Activated CD8-positive, alpha-beta T cell treated with anti-CD3 and anti-CD28 coated beads, Interleukin-2, amount 10 ng/mL, durations not matched to agents 7 days and 5 days (primary cell): ENCODE measurements at regions of chr17 and their contacts with region 1.

Region 1: DNA sequence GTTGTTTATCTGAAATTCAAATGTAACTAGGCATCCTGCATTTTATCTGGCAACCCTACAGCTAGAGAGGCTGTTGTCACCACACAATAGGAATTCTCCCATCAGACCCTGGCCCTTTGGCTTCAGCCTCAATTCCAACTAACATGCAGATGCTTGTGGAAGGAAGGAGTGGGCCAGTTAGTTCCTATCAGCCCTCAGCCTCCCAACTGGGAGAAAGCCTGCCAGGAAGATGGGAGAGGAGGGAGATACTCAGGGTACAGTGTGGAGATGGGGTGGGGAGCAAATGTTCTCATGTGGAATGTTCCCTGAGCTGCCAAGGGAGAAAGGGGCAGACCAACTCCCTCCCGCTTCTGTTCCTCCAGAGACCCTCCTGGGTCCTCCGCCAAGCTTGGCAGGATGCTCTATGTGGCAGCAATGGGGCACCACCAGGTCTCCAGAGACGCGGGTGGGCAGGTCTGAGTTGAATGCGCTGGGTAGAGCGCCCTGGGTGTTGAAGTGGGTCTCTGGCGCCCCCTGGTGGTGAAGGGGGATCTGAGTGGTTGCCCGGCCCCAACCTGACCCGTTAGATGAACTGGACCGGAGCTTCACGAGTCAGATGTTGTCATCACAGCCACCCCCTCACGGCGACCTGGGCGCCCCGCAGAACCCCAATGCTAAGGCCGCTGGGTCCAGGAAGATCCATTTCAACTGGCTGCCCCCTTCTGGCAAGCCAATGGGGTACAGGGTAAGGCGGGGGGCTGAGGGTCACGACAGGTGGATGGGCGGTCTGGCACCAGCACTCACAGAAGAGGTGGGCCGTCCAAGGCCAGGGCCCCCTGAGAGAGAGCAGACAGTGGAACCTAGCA is 15.2 kb downstream of the GALK1 start:
- DNase-seq: peak; percentile 93
- ATAC-seq: peak; percentile 73
- H3K4me3 Mint-ChIP-seq: no peak overlapping the region
- H3K27ac Mint-ChIP-seq: no peak overlapping the region
- H3K4me1 Mint-ChIP-seq: peaks cover 18% of the 10 kb centered on the region
- H3K27me3 Mint-ChIP-seq: peaks cover 2% of the 10 kb centered on the region

Region 2: GRCh38 chr17:75456417-75457046 is 293.2 kb before region 1 on chr17 and contains the start of gene TMEM94:
- CTCF ChIA-PET with region 1: interaction called, 12 read pairs
- POLR2A ChIA-PET with region 1: no interaction called
- DNase-seq: peak; percentile 96
- ATAC-seq: peak; percentile 98
- H3K4me3 Mint-ChIP-seq: peak within 1 kb of the TSS; percentile 87
- H3K27ac Mint-ChIP-seq: peak within 1 kb of the TSS; percentile 93
- H3K4me1 Mint-ChIP-seq: peaks cover 43% of the 10 kb centered on the region
- H3K27me3 Mint-ChIP-seq: no peaks in the 10 kb centered on the region
- total RNA-seq, gene TMEM94: 81.9 to 84.8 TPM

Region 3: GRCh38 chr17:75645889-75646637 is 103.7 kb before region 1 on chr17:
- CTCF ChIA-PET with region 1: interaction called, 48 read pairs
- POLR2A ChIA-PET with region 1: no interaction called
- DNase-seq: peak; percentile 53
- ATAC-seq: peak; percentile 90
- H3K4me3 Mint-ChIP-seq: no peak overlapping the region
- H3K27ac Mint-ChIP-seq: peak overlapping the region; percentile 87
- H3K4me1 Mint-ChIP-seq: peaks cover 25% of the 10 kb centered on the region
- H3K27me3 Mint-ChIP-seq: no peaks in the 10 kb centered on the region

Region 4: GRCh38 chr17:75679706-75680442 is 69.9 kb before region 1 on chr17:
- CTCF ChIA-PET with region 1: interaction called, 152 read pairs
- POLR2A ChIA-PET with region 1: interaction called, 5 read pairs
- DNase-seq: no peak
- ATAC-seq: no peak
- H3K4me3 Mint-ChIP-seq: no peak overlapping the region
- H3K27ac Mint-ChIP-seq: no peak overlapping the region
- H3K4me1 Mint-ChIP-seq: peaks cover 6% of the 10 kb centered on the region
- H3K27me3 Mint-ChIP-seq: no peaks in the 10 kb centered on the region

Region 5: DNA sequence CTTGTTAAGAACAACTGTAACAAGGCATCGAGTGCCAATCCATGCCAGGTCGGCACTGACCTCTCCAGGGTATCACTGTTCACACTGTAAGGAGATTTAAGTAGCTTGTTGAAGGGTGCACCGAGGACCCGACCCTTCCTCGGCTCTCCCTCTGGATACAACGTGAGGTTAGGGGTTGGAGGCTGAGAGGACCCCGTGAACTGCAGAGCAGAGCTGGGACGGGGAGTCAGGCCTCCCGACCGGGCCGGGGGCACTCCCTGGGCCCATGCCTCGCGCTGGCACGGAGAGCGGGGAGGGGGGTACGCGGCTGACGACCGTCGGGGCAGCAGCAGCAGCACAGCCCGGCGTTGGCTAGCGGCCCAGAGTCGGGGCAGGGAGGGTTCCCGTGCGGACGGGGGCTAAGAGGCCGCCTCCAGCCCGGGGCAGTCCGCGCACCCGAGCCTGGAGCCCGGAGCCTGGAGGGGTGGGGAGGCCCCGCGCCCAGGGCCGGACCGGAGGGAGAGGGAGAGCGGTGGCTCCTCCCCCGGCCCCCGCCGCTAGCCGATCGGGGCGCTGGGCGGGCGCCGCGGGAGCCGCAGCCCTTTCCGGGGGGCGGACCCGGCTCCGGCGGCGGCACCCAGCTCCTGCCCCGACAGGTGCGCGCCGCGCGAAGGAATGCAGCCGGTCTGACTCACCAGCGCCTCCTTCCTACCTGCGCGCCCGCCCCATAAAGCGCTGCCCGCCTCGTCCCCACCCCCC is 28.9 kb before region 1 on chr17 and contains the start of gene ITGB4:
- CTCF ChIA-PET with region 1: interaction called, 16 read pairs
- POLR2A ChIA-PET with region 1: no interaction called
- DNase-seq: peak; percentile 75
- ATAC-seq: peak; percentile 92
- H3K4me3 Mint-ChIP-seq: peak within 1 kb of the TSS; percentile 71
- H3K27ac Mint-ChIP-seq: peak within 1 kb of the TSS; percentile 20
- H3K4me1 Mint-ChIP-seq: peaks cover 6% of the 10 kb centered on the region
- H3K27me3 Mint-ChIP-seq: peaks cover 17% of the 10 kb centered on the region
- total RNA-seq, gene ITGB4: 0.89 to 2.0 TPM

Region 6: DNA sequence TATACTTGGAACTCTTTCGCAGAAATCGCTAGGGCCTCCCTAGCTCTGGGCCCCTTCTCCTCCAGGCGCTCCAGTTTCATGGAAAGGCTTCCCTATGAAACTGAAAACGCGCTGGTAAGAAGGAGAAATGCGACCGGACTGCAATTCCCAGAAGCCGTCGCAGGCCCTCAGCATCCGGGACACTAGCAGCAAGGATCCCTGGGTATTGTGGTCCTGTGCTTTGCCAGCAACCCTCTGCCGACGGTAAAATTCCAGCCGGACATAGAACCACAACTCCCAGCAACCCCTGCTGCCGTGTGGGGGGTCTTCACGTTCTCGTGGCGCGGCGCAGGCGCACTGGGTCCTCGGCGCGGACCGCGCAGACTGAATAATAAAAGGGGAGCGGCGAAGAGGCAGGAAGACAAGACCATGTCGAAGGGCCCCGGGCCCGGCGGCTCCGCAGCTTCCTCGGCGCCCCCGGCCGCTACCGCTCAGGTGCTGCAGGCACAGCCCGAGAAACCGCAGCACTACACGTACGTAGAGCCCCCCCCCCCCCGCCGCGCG is 34.8 kb after region 1 on chr17 and contains the start of gene UNK:
- CTCF ChIA-PET with region 1: interaction called, 33 read pairs
- POLR2A ChIA-PET with region 1: interaction called, 11 read pairs
- DNase-seq: peak; percentile 98
- ATAC-seq: peak; percentile 72
- H3K4me3 Mint-ChIP-seq: peak within 1 kb of the TSS; percentile 91
- H3K27ac Mint-ChIP-seq: peak within 1 kb of the TSS; percentile 100
- H3K4me1 Mint-ChIP-seq: peaks cover 50% of the 10 kb centered on the region
- H3K27me3 Mint-ChIP-seq: peaks cover 3% of the 10 kb centered on the region
- total RNA-seq, gene UNK: 30.2 to 31.0 TPM

Region 7: DNA sequence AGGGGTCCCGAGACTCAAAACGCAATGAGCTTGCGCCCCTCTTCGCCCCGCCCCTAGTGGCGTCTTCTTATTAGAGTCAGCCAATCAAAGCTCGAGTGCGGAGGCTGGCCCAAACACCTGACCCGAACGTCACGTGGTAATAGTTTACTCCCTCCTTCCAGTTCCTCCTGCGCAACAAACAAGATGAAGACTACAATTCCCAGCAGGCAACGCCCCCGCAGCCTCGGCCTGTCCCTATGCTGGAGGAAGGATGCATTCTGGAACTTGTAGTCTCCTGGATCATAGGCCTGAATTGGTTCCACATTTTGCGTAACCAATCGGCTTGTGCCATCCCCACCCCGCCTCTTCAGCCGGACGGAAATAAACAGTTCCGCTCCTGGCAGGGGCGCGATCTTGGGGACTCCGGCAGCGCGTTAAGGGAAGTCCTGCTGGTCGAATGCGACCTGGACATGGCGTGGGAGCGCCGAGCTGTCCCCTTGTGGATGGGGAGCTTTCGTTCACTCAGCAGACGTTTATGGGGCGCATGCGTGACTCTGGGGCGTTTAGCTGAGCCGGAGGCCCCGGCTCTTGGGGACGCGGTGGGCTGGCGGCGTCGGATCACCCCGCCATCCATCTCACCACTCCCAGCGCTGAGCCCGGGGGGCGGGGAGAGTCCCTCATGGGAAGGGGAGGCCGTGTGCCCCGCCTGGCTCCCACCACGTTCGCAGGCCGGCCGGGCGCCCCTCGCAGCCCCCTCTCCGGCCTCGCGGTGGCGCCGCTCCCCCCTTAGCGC is 105.7 kb after region 1 on chr17 and contains the start of gene WBP2:
- CTCF ChIA-PET with region 1: interaction called, 15 read pairs
- POLR2A ChIA-PET with region 1: interaction called, 3 read pairs
- DNase-seq: peak; percentile 99
- ATAC-seq: peak; percentile 93
- H3K4me3 Mint-ChIP-seq: no peak within 1 kb of the TSS
- H3K27ac Mint-ChIP-seq: peak within 1 kb of the TSS; percentile 93
- H3K4me1 Mint-ChIP-seq: peaks cover 37% of the 10 kb centered on the region
- H3K27me3 Mint-ChIP-seq: no peaks in the 10 kb centered on the region
- total RNA-seq, gene WBP2: 64.3 to 68.6 TPM

Region 8: GRCh38 chr17:75996665-75997590 is 247.2 kb after region 1 on chr17:
- CTCF ChIA-PET with region 1: no interaction called
- POLR2A ChIA-PET with region 1: no interaction called
- DNase-seq: peak; percentile 49
- ATAC-seq: peak; percentile 46
- H3K4me3 Mint-ChIP-seq: peak overlapping the region; percentile 23
- H3K27ac Mint-ChIP-seq: peak overlapping the region; percentile 86
- H3K4me1 Mint-ChIP-seq: peaks cover 19% of the 10 kb centered on the region
- H3K27me3 Mint-ChIP-seq: no peaks in the 10 kb centered on the region